Sigmoid colon (tissue), 7 donors: ENCODE measurements at regions of chr22 and their contacts with region 1.

Region 1: DNA sequence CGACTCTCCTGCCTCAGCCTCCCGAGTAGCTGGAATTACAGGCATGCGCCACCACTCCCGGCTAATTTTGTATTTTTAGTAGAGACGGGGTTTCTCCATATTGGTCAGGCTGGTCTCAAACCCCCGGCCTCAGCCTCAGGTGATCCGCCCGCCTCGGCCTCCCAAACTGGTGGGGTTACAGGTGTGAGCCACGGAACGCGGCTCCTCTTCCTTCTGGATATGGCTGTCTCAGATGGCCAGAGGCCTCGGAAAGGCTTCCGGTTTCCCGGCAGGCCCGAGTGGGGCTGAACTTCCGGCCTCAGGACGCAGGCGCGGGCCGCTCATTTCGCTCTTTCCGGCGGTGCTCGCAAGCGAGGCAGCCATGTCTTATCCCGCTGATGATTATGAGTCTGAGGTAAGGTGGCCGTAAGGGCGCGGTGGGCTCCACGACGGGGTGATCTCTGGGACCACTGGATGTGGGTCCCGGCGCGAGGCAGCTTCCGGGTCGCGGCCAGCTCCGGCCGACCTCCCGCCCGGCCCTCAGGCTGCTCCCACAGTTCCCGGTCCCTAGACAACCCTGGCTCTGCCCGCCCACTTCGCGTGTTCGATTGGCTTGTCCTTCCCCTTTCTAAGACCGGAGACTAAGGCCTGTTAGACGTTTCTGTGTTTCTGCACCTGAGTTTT is at the start of gene EIF3L:
- DNase-seq: peak; percentile 95
- H3K4me3 ChIP-seq: peak within 1 kb of the TSS; percentile 56 to 92 (median 76)
- H3K27ac ChIP-seq: peak within 1 kb of the TSS; percentile 85 to 90 (median 89)
- H3K4me1 ChIP-seq: peaks cover 0 to 35% (median 25%) of the 10 kb centered on the region in 4 donors
- H3K27me3 ChIP-seq: no peaks in the 10 kb centered on the region
- CTCF ChIP-seq: no peak
- EP300 ChIP-seq: peak in 1 of 4 donors; percentile 11
- POLR2A ChIP-seq: peak; percentile 83 to 91
- total RNA-seq, gene EIF3L: 366 to 628 (median 532) TPM

Region 2: GRCh38 chr22:38181453-38182247 is 332.4 kb after region 1 on chr22 and contains the start of gene PLA2G6:
- intact Hi-C with region 1: loop called (anchors 10 kb)
- DNase-seq: peak; percentile 99
- H3K4me3 ChIP-seq: peak within 1 kb of the TSS; percentile 36 to 64 (median 58)
- H3K27ac ChIP-seq: peak within 1 kb of the TSS; percentile 79 to 92 (median 87)
- H3K4me1 ChIP-seq: peaks cover 0 to 31% (median 29%) of the 10 kb centered on the region in 4 donors
- H3K27me3 ChIP-seq: no peaks in the 10 kb centered on the region
- CTCF ChIP-seq: no peak
- EP300 ChIP-seq: peak in 1 of 4 donors; percentile 37
- POLR2A ChIP-seq: no peak
- total RNA-seq, gene PLA2G6: 10.7 to 36.2 (median 26.5) TPM